Mammary epithelial cell (primary cell): ENCODE measurements at regions of chr10 and their contacts with region 1.

Region 1: GRCh38 chr10:119608316-119609155 is 11.8 kb upstream of the TIAL1 start:
- DNase-seq: peak; percentile 38
- H3K4me3 ChIP-seq: no peak overlapping the region
- H3K27ac ChIP-seq: no peak overlapping the region
- H3K4me1 ChIP-seq: no peaks in the 10 kb centered on the region
- H3K27me3 ChIP-seq: no peaks in the 10 kb centered on the region
- CTCF ChIP-seq: peak; percentile 74 to 90

Region 2: GRCh38 chr10:119542988-119543813 is 65.3 kb before region 1 on chr10:
- CTCF ChIA-PET with region 1: no interaction called
- dilution Hi-C with region 1: no loop called
- in situ Hi-C with region 1: no loop called
- intact Hi-C with region 1: no loop called
- DNase-seq: peak; percentile 65
- H3K4me3 ChIP-seq: peak overlapping the region; percentile 69 to 82 (median 77)
- H3K27ac ChIP-seq: no peak overlapping the region
- H3K4me1 ChIP-seq: peaks cover 30% of the 10 kb centered on the region
- H3K27me3 ChIP-seq: peaks cover 2% of the 10 kb centered on the region
- CTCF ChIP-seq: peak; percentile 1 to 39

Region 3: GRCh38 chr10:119667562-119668328 is 59.2 kb after region 1 on chr10:
- CTCF ChIA-PET with region 1: interaction called, 7 read pairs
- dilution Hi-C with region 1: no loop called
- in situ Hi-C with region 1: no loop called
- intact Hi-C with region 1: loop called (anchors 1 kb)
- DNase-seq: peak; percentile 96
- H3K4me3 ChIP-seq: no peak overlapping the region
- H3K27ac ChIP-seq: peak overlapping the region; percentile 64
- H3K4me1 ChIP-seq: peaks cover 71% of the 10 kb centered on the region
- H3K27me3 ChIP-seq: no peaks in the 10 kb centered on the region
- CTCF ChIP-seq: peak in 1 of 2 donors; percentile 25

Region 4: GRCh38 chr10:119725828-119726675 is 117.5 kb after region 1 on chr10 and contains the start of gene INPP5F:
- CTCF ChIA-PET with region 1: no interaction called
- dilution Hi-C with region 1: no loop called
- in situ Hi-C with region 1: no loop called
- intact Hi-C with region 1: loop called (anchors 5 kb)
- DNase-seq: peak; percentile 98
- H3K4me3 ChIP-seq: peak within 1 kb of the TSS; percentile 76 to 95 (median 85)
- H3K27ac ChIP-seq: peak within 1 kb of the TSS; percentile 54
- H3K4me1 ChIP-seq: peaks cover 15% of the 10 kb centered on the region
- H3K27me3 ChIP-seq: no peaks in the 10 kb centered on the region
- CTCF ChIP-seq: peak in 1 of 2 donors; percentile 27
- total RNA-seq, gene INPP5F: 19.3 to 22.1 TPM

Region 5: GRCh38 chr10:119859420-119860258 is 251.1 kb after region 1 on chr10:
- CTCF ChIA-PET with region 1: no interaction called
- dilution Hi-C with region 1: no loop called
- in situ Hi-C with region 1: loop called (anchors 10 to 25 kb)
- intact Hi-C with region 1: loop called (anchors 1 kb)
- DNase-seq: peak; percentile 27
- H3K4me3 ChIP-seq: no peak overlapping the region
- H3K27ac ChIP-seq: no peak overlapping the region
- H3K4me1 ChIP-seq: no peaks in the 10 kb centered on the region
- H3K27me3 ChIP-seq: no peaks in the 10 kb centered on the region
- CTCF ChIP-seq: peak; percentile 47 to 60